ENCODE measurements at regions of chr5 and their contacts with region 1.

Region 1: GRCh38 chr5:54844905-54845566 is 140.4 kb downstream of the ESM1 start:
- DNase-seq: no peak
- H3K4me3 Mint-ChIP-seq: no peak overlapping the region
- H3K27ac Mint-ChIP-seq: no peak overlapping the region
- H3K4me1 Mint-ChIP-seq: peaks cover 12% of the 10 kb centered on the region
- H3K27me3 Mint-ChIP-seq: peaks cover 18% of the 10 kb centered on the region

Region 2: GRCh38 chr5:54524704-54525103 is 320.3 kb before region 1 on chr5:
- CTCF ChIA-PET with region 1: interaction called, 132 read pairs
- POLR2A ChIA-PET with region 1: interaction called, 3 read pairs
- DNase-seq: no peak
- H3K4me3 Mint-ChIP-seq: no peak overlapping the region
- H3K27ac Mint-ChIP-seq: no peak overlapping the region
- H3K4me1 Mint-ChIP-seq: peaks cover 54% of the 10 kb centered on the region
- H3K27me3 Mint-ChIP-seq: no peaks in the 10 kb centered on the region

Region 3: DNA sequence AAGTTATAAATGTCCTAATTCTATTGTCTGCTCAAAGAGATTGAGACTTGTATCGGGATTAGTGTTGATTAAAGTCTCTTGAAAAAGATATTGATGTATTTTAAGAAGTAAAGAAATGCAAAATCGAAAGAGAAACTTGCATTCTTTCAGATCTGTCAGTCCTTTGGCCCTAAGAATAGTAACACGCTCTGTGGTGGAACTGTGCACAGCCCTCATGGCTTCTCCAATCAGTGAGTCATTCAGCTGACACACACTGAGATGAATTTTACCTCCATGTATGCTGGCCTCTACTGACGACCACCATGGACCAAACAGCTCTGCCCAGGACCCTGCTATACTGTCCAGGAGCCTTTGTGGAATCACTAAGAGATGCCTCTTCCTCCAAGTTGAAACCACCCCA is 92.0 kb before region 1 on chr5:
- CTCF ChIA-PET with region 1: no interaction called
- POLR2A ChIA-PET with region 1: no interaction called
- DNase-seq: peak; percentile 53
- H3K4me3 Mint-ChIP-seq: peak overlapping the region; percentile 42
- H3K27ac Mint-ChIP-seq: peak overlapping the region; percentile 76
- H3K4me1 Mint-ChIP-seq: peaks cover 32% of the 10 kb centered on the region
- H3K27me3 Mint-ChIP-seq: no peaks in the 10 kb centered on the region

Region 4: DNA sequence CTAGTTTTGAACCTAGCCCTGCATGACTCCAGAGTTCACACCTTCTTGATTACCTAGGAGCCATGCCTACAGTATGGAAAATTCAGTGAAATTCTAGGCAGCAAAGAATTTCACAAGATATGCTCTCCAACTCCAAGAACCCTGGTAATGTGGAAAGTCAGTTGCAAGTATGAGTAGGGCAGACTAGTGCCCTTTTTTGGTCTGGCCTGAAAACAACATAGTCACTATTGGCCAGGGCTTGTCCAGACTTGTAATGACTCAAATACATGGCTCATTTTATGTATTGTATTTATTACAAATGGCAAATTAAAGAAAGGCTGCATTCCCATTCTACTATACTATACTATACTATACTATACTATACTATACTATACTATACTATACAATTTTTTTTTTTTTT is 20.0 kb before region 1 on chr5:
- CTCF ChIA-PET with region 1: interaction called, 10 read pairs
- POLR2A ChIA-PET with region 1: no interaction called
- DNase-seq: no peak
- H3K4me3 Mint-ChIP-seq: no peak overlapping the region
- H3K27ac Mint-ChIP-seq: no peak overlapping the region
- H3K4me1 Mint-ChIP-seq: no peaks in the 10 kb centered on the region
- H3K27me3 Mint-ChIP-seq: peaks cover 31% of the 10 kb centered on the region

Region 5: GRCh38 chr5:54867310-54867944 is 22.4 kb after region 1 on chr5:
- CTCF ChIA-PET with region 1: interaction called, 22 read pairs
- POLR2A ChIA-PET with region 1: interaction called, 4 read pairs
- DNase-seq: no peak
- H3K4me3 Mint-ChIP-seq: no peak overlapping the region
- H3K27ac Mint-ChIP-seq: no peak overlapping the region
- H3K4me1 Mint-ChIP-seq: peaks cover 20% of the 10 kb centered on the region
- H3K27me3 Mint-ChIP-seq: peaks cover 61% of the 10 kb centered on the region

Region 6: GRCh38 chr5:54915466-54916027 is 70.5 kb after region 1 on chr5:
- CTCF ChIA-PET with region 1: no interaction called
- POLR2A ChIA-PET with region 1: no interaction called
- DNase-seq: no peak
- H3K4me3 Mint-ChIP-seq: no peak overlapping the region
- H3K27ac Mint-ChIP-seq: no peak overlapping the region
- H3K4me1 Mint-ChIP-seq: no peaks in the 10 kb centered on the region
- H3K27me3 Mint-ChIP-seq: peaks cover 45% of the 10 kb centered on the region